ENCODE measurements at regions of chr7 and their contacts with region 1.

Region 1: DNA sequence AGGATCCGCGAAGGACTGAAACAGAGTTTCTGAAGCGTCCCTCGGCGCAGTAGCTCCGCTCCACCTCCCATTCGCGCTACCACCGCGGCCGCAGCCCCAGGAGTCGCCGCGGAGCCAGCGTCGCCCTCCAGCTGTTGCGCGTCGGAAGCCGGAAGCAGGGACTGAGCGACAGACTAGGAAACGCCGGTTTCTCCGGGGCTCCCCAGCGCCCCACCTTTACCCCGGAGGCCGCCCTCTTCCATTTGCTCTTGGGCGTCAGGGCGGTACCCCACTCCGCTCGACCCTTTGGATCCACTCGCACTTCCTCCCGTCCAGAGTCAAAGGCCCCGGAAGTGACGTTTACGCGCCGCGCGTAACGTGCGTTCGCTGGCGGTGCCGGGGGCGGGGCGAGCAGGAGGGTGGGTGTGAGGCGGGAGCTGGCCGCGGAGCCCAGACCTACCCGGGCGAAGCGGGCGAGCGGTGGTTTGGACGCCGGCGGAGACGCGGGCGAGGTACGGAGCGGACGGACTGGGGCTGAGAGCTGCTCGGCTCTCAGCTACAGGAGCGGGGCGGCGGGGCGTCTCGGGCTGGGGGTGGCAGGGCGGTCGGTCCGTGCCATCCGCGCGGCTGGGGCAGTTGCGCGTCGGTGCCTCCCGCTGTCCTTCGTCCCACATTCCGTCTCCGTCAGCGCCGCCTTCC is at the start of gene RABGEF1:
- DNase-seq: peak; percentile 91 to 99 (median 96)
- ATAC-seq: peak; percentile 91
- H3K4me3 ChIP-seq: peak within 1 kb of the TSS; percentile 90
- H3K4me3 Mint-ChIP-seq: peak within 1 kb of the TSS; percentile 98
- H3K27ac ChIP-seq: peak within 1 kb of the TSS; percentile 71 to 97
- H3K27ac Mint-ChIP-seq: peak within 1 kb of the TSS; percentile 98
- H3K4me1 ChIP-seq: peaks cover 36% of the 10 kb centered on the region
- H3K4me1 Mint-ChIP-seq: peaks cover 42% of the 10 kb centered on the region
- H3K27me3 ChIP-seq: no peaks in the 10 kb centered on the region
- H3K27me3 Mint-ChIP-seq: no peaks in the 10 kb centered on the region
- CTCF ChIP-seq: no peak
- total RNA-seq, gene RABGEF1: 18.9 to 20.1 TPM

Region 2: DNA sequence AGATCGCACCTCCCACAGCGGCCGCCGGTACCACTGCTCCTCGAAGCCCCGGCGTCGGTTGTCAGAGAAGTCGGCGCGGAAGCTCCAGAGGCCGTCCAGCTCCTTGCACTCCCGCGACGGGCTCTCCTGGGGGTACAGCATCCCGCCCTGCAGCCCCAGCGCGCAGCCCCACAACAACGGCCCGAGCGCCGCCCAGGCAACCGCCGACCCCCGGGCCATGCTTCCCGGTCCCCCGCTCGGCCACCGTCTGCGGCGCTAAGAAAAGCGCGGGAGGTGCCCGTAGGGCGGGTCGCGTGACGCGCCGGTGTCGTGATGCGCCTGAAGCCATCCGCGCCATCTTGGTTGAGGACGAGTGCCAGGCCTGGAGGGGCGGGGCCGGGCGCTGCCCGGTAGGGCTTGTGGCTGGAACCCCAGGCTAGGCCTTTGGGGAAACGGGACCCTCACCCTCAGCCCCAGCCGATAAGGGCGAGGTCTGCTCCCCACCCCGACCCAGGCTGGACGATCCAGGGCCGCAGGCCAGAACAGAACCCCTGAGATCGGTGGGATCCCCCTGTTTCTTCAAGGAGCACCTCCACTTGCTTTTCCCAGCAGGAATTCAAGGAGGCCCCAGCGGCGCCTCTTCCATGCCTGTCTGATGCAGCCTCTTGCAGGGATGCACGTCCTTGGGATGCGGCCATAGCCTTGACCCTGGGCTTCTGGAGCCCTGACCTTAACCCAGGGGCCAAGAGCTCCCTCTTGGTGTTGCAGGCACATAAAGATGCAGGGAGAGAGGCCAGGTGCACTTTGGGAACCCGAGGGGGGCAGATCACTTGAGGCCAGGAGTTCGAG is 758.3 kb before region 1 on chr7 and contains the start of gene GUSB:
- CTCF ChIA-PET with region 1: no interaction called
- POLR2A ChIA-PET with region 1: no interaction called
- intact Hi-C with region 1: loop called in 1 of 2 experiments (anchors 5 kb)
- DNase-seq: peak; percentile 80 to 92 (median 88)
- ATAC-seq: peak; percentile 83
- H3K4me3 ChIP-seq: peak within 1 kb of the TSS; percentile 83
- H3K4me3 Mint-ChIP-seq: peak within 1 kb of the TSS; percentile 92
- H3K27ac ChIP-seq: peak within 1 kb of the TSS in 1 of 2 donors; percentile 68
- H3K27ac Mint-ChIP-seq: peak within 1 kb of the TSS; percentile 84
- H3K4me1 ChIP-seq: peaks cover 31% of the 10 kb centered on the region
- H3K4me1 Mint-ChIP-seq: peaks cover 9% of the 10 kb centered on the region
- H3K27me3 ChIP-seq: no peaks in the 10 kb centered on the region
- H3K27me3 Mint-ChIP-seq: no peaks in the 10 kb centered on the region
- CTCF ChIP-seq: no peak
- total RNA-seq, gene GUSB: 42.9 to 49.7 TPM

Region 3: DNA sequence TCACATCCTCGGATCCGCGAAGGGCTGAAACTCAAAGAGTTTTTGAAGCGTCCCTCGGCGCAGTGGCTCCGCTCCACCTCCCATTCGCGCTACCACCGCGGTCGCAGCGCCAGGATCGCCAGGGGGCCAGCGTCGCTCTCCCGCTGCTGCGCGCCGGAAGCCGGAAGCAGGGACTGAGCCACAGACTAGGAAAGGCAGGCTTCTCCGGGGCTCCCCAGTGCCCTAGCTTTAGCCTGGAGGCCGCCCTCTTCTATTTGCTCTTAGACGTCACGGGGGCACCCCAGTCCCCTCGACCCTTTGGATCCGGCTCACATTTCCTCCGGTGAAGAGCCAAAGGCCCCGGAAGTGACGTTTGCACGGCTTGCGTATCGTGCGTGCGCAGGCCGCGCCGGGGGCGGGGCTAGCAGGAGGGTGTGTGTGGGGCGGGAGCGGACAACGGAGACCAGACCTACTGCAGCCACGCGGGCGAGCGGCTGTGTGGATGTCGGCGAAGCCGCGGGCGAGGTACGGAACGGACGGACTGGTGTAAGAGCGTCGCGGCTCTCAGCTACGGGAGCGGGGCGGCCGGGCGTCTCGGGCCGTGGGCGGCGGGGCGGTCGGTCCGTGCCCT is 86.2 kb before region 1 on chr7:
- CTCF ChIA-PET with region 1: interaction called, 6 read pairs
- POLR2A ChIA-PET with region 1: interaction called, 24 read pairs
- intact Hi-C with region 1: loop called (anchors 1 to 2 kb)
- DNase-seq: peak; percentile 94 to 99 (median 96)
- ATAC-seq: peak; percentile 90
- H3K4me3 ChIP-seq: peak overlapping the region; percentile 97
- H3K4me3 Mint-ChIP-seq: peak overlapping the region; percentile 99
- H3K27ac ChIP-seq: peak overlapping the region; percentile 91 to 92
- H3K27ac Mint-ChIP-seq: peak overlapping the region; percentile 97
- H3K4me1 ChIP-seq: peaks cover 26% of the 10 kb centered on the region
- H3K4me1 Mint-ChIP-seq: peaks cover 47% of the 10 kb centered on the region
- H3K27me3 ChIP-seq: no peaks in the 10 kb centered on the region
- H3K27me3 Mint-ChIP-seq: no peaks in the 10 kb centered on the region
- CTCF ChIP-seq: peak; percentile 35

Region 4: GRCh38 chr7:66720561-66720960 is 19.9 kb before region 1 on chr7:
- CTCF ChIA-PET with region 1: no interaction called
- POLR2A ChIA-PET with region 1: no interaction called
- intact Hi-C with region 1: no loop called
- DNase-seq: no peak
- ATAC-seq: no peak
- H3K4me3 ChIP-seq: no peak overlapping the region
- H3K4me3 Mint-ChIP-seq: no peak overlapping the region
- H3K27ac ChIP-seq: no peak overlapping the region
- H3K27ac Mint-ChIP-seq: no peak overlapping the region
- H3K4me1 ChIP-seq: no peaks in the 10 kb centered on the region
- H3K4me1 Mint-ChIP-seq: no peaks in the 10 kb centered on the region
- H3K27me3 ChIP-seq: no peaks in the 10 kb centered on the region
- H3K27me3 Mint-ChIP-seq: no peaks in the 10 kb centered on the region
- CTCF ChIP-seq: no peak

Region 5: GRCh38 chr7:66768865-66769832 is 28.7 kb after region 1 on chr7:
- CTCF ChIA-PET with region 1: no interaction called
- POLR2A ChIA-PET with region 1: no interaction called
- intact Hi-C with region 1: no loop called
- DNase-seq: no peak
- ATAC-seq: no peak
- H3K4me3 ChIP-seq: no peak overlapping the region
- H3K4me3 Mint-ChIP-seq: no peak overlapping the region
- H3K27ac ChIP-seq: no peak overlapping the region
- H3K27ac Mint-ChIP-seq: peak overlapping the region; percentile 34
- H3K4me1 ChIP-seq: peaks cover 12% of the 10 kb centered on the region
- H3K4me1 Mint-ChIP-seq: peaks cover 64% of the 10 kb centered on the region
- H3K27me3 ChIP-seq: no peaks in the 10 kb centered on the region
- H3K27me3 Mint-ChIP-seq: no peaks in the 10 kb centered on the region
- CTCF ChIP-seq: no peak

Region 6: GRCh38 chr7:66844552-66845378 is 104.3 kb after region 1 on chr7:
- CTCF ChIA-PET with region 1: no interaction called
- POLR2A ChIA-PET with region 1: interaction called, 12 read pairs
- intact Hi-C with region 1: loop called (anchors 1 to 5 kb)
- DNase-seq: peak; percentile 98 to 100 (median 99)
- ATAC-seq: peak; percentile 89
- H3K4me3 ChIP-seq: peak overlapping the region; percentile 99
- H3K4me3 Mint-ChIP-seq: peak overlapping the region; percentile 96
- H3K27ac ChIP-seq: peak overlapping the region; percentile 98 to 100
- H3K27ac Mint-ChIP-seq: peak overlapping the region; percentile 97
- H3K4me1 ChIP-seq: peaks cover 21% of the 10 kb centered on the region
- H3K4me1 Mint-ChIP-seq: peaks cover 24% of the 10 kb centered on the region
- H3K27me3 ChIP-seq: no peaks in the 10 kb centered on the region
- H3K27me3 Mint-ChIP-seq: peaks cover 3% of the 10 kb centered on the region
- CTCF ChIP-seq: peak; percentile 37

Region 7: GRCh38 chr7:67302113-67303039 is 561.9 kb after region 1 on chr7:
- CTCF ChIA-PET with region 1: no interaction called
- POLR2A ChIA-PET with region 1: interaction called, 3 read pairs
- intact Hi-C with region 1: loop called in 1 of 2 experiments (anchors 5 kb)
- DNase-seq: peak; percentile 90 to 99 (median 96)
- ATAC-seq: peak; percentile 82
- H3K4me3 ChIP-seq: peak overlapping the region; percentile 70
- H3K4me3 Mint-ChIP-seq: peak overlapping the region; percentile 96
- H3K27ac ChIP-seq: peak overlapping the region; percentile 68 to 89
- H3K27ac Mint-ChIP-seq: peak overlapping the region; percentile 99
- H3K4me1 ChIP-seq: peaks cover 24% of the 10 kb centered on the region
- H3K4me1 Mint-ChIP-seq: peaks cover 23% of the 10 kb centered on the region
- H3K27me3 ChIP-seq: no peaks in the 10 kb centered on the region
- H3K27me3 Mint-ChIP-seq: no peaks in the 10 kb centered on the region
- CTCF ChIP-seq: no peak